Caco-2 (cell line): ENCODE measurements at regions of chr20 and their contacts with region 1.

Region 1: DNA sequence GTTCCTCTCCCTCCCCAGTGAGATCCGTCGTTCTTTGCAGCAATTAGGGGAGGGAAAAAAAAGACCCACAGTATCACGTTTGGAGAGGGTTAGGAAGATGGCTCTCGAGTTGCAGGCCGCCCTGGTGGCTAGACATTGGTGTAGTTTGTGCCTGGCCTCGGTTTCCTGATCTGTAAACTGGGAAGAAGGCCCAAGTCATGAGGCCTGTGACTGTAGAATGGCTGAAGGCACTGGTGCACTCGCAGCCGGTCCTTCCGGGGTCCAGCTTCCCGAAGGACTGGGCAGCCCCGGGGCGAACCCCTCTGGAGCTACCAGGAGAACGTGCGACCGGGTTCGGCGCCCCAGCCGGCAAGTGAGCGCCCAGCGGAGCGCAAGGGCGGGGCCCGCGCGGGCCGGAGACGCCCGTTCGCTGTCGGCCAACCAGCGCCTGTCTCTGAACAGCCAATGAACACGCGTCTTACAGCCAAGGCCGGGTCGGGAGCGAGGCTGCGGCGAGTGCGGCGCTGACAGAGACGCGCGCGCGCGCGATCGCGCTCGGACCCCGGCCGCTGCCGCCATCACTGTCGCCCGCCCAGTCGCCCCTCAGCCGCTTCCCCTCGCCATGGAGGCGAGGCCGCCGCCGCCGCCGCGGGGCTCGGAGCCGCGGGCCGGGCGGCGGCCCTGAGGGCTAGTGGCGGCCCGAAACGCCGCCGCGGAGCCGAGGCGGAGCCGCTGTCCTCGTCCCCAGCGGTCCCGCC is at the start of gene PTPRA:
- DNase-seq: peak; percentile 95 to 96
- H3K4me3 ChIP-seq: peak within 1 kb of the TSS; percentile 72
- H3K4me3 Mint-ChIP-seq: peak within 1 kb of the TSS; percentile 91
- H3K27ac Mint-ChIP-seq: peak within 1 kb of the TSS; percentile 76
- H3K4me1 ChIP-seq: peaks cover 12% of the 10 kb centered on the region
- H3K4me1 Mint-ChIP-seq: peaks cover 22% of the 10 kb centered on the region
- H3K27me3 ChIP-seq: no peaks in the 10 kb centered on the region
- H3K27me3 Mint-ChIP-seq: no peaks in the 10 kb centered on the region
- CTCF ChIP-seq: no peak
- total RNA-seq, gene PTPRA: 51.4 and 57.0 TPM in 2 replicates

Region 2: DNA sequence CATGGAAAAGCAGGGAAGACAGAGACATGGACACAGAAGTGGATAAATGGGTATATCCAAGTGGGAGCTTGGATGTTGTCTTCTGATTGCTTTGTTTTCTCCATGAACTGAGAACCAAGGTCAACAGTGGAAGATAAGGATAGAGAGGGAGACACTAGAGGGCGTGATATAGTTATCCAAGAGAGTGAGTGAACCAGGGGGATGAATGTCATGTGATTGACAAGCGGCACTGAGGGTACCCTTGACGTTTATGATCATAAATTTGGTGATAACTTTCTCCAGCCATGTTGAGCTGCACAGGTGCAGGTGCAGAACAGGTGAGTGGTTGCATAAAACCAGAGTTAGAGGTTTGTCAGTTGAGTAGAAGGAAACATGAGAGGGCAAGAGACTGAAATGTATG is 159.9 kb before region 1 on chr20:
- CTCF ChIA-PET with region 1: no interaction called
- POLR2A ChIA-PET with region 1: no interaction called
- intact Hi-C with region 1: no loop called
- DNase-seq: no peak
- H3K4me3 ChIP-seq: no peak overlapping the region
- H3K4me3 Mint-ChIP-seq: no peak overlapping the region
- H3K27ac Mint-ChIP-seq: no peak overlapping the region
- H3K4me1 ChIP-seq: no peaks in the 10 kb centered on the region
- H3K4me1 Mint-ChIP-seq: no peaks in the 10 kb centered on the region
- H3K27me3 ChIP-seq: no peaks in the 10 kb centered on the region
- H3K27me3 Mint-ChIP-seq: peaks cover 3% of the 10 kb centered on the region
- CTCF ChIP-seq: peak; percentile 26 to 49

Region 3: DNA sequence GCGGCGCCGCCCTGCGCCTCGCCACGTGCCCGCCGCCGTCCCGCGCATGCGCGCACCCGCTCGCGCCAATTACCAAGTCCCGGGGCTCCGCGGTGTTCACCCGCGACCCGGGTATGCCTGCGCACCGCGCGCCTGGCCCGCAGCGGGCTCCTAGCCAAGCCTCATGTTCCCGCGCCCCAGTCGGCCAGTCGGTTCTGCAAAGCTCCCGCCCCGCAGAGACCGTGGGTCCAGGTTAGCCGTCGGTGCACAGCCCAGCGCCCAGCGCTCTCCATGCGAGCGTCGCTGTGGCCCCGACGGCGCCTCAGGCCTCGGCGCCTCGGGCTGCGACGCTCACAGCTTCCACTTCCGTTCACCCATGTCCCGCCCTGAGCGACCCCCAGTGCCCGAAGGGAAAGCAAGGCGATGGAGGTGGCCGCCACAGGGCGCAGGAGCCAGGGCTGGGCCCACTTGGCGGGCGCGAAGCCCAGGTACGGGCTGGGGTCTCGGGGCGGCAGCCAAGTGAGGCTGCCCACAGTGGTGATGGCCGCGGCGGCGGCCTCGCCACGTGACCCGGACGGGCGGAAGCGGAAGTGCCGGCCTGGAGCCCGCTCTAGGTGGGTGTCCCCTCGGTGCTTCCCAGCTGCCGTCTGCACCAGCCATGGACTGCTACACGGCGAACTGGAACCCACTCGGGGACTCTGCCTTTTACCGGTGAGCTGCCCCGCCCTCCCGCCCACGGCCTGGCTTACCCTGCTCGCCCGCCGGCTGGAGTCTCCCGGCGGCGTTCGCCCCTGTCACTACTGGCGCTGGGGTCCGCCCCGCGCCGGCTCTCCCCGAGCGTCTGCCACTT is 32.8 kb before region 1 on chr20 and contains the starts of genes PCED1A and VPS16:
- CTCF ChIA-PET with region 1: no interaction called
- POLR2A ChIA-PET with region 1: interaction called, 3 read pairs
- intact Hi-C with region 1: loop called (anchors 1 kb)
- DNase-seq: peak; percentile 90 to 93
- H3K4me3 ChIP-seq: peak within 1 kb of the TSS; percentile 91
- H3K4me3 Mint-ChIP-seq: peak within 1 kb of the TSS; percentile 89
- H3K27ac Mint-ChIP-seq: peak within 1 kb of the TSS; percentile 97
- H3K4me1 ChIP-seq: peaks cover 8% of the 10 kb centered on the region; the same call in 1 of the 2 replicates
- H3K4me1 Mint-ChIP-seq: peaks cover 7% of the 10 kb centered on the region
- H3K27me3 ChIP-seq: no peaks in the 10 kb centered on the region
- H3K27me3 Mint-ChIP-seq: no peaks in the 10 kb centered on the region
- CTCF ChIP-seq: no peak
- total RNA-seq, gene PCED1A: 43.9 and 44.7 TPM in 2 replicates
- total RNA-seq, gene VPS16: 41.3 and 46.6 TPM in 2 replicates

Region 4: GRCh38 chr20:2946988-2947961 is 74.1 kb after region 1 on chr20:
- CTCF ChIA-PET with region 1: no interaction called
- POLR2A ChIA-PET with region 1: no interaction called
- intact Hi-C with region 1: loop called (anchors 1 kb)
- DNase-seq: peak; percentile 47 to 61
- H3K4me3 ChIP-seq: no peak overlapping the region
- H3K4me3 Mint-ChIP-seq: peak overlapping the region; percentile 6
- H3K27ac Mint-ChIP-seq: no peak overlapping the region
- H3K4me1 ChIP-seq: peaks cover 5% of the 10 kb centered on the region
- H3K4me1 Mint-ChIP-seq: peaks cover 23% of the 10 kb centered on the region
- H3K27me3 ChIP-seq: no peaks in the 10 kb centered on the region
- H3K27me3 Mint-ChIP-seq: no peaks in the 10 kb centered on the region
- CTCF ChIP-seq: no peak

Region 5: DNA sequence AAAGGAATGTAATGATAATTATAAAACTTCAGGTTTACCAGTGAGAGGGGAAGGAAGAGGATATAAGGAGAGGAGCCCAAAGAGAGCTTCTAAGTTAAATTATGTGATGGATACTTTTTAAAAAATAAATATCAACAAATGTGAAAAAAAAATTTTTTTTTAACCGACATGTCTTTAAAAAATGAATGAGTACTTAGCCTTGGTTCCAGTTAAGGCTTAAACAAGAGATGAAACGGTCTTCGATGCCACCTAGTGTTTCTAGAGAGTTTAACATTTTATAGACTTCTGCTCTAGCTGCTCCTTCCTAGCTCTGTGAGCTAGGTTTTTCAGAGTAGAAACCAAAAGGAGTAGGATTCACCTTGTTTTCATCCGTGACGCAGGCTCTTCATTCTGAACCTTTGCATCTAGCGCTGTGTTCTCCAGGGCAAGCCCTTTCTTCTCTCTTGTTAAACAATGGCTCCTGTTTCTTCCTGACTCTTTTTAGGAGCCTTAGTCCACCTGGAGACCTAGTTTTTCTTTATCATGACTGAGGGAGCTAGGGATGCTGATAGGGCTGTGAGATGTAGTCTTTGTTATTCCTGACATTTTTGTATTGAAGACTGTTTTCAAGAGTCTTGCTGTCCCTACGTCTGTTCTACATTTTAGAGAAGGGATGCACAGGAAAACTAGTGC is 127.8 kb after region 1 on chr20:
- CTCF ChIA-PET with region 1: no interaction called
- POLR2A ChIA-PET with region 1: no interaction called
- intact Hi-C with region 1: loop called (anchors 2 kb)
- DNase-seq: peak in 1 of 2 experiments; percentile 60
- H3K4me3 ChIP-seq: no peak overlapping the region
- H3K4me3 Mint-ChIP-seq: no peak overlapping the region
- H3K27ac Mint-ChIP-seq: no peak overlapping the region
- H3K4me1 ChIP-seq: no peaks in the 10 kb centered on the region
- H3K4me1 Mint-ChIP-seq: no peaks in the 10 kb centered on the region
- H3K27me3 ChIP-seq: no peaks in the 10 kb centered on the region
- H3K27me3 Mint-ChIP-seq: no peaks in the 10 kb centered on the region
- CTCF ChIP-seq: peak; percentile 51 to 60